ENCODE measurements at regions of chr3 and their contacts with region 1.

Region 1: DNA sequence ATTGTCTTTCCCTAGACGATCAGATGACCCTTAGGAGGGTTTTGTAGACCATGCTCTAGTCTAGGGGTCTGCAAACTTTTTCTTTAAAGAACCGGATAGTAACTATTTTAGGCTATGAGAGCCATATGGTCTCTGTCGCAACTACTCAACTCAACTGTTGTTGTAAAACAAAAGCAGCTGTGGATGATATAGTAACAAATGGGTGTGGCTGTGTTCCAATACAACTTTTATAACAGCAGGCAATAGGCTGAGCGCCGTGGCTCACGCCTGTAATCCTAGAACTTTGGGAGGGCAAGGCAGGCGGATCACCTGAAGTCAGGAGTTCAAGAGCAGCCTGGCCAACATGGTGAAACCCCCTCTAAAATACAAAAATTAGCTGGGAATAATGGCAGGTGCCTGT is 6.1 kb upstream of the CMTM6 start:
- DNase-seq: no peak
- H3K4me3 ChIP-seq: no peak overlapping the region
- H3K27ac ChIP-seq: no peak overlapping the region
- H3K4me1 ChIP-seq: no peaks in the 10 kb centered on the region
- H3K27me3 ChIP-seq: no peaks in the 10 kb centered on the region
- CTCF ChIP-seq: no peak
- POLR2A ChIP-seq: no peak

Region 2: DNA sequence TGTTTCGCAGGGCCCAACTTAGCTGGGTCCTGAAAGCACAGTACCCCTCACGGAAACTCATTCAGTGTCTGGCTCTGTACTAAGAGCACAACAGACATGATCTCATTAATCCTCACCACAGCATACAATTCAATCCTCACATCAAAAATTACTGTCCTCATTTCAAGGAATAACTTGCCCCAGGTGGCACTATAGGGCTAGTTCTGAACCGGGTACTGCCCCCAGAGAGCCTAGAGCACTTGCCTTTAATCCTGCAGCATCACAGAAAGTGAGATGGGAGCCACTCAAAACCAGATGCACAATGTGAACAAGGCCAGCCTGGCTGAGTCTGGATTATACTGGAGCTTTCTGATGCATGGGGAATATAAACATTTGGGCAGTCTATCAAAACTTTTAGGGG is 650.3 kb before region 1 on chr3:
- intact Hi-C with region 1: no loop called
- DNase-seq: no peak
- H3K4me3 ChIP-seq: no peak overlapping the region
- H3K27ac ChIP-seq: no peak overlapping the region
- H3K4me1 ChIP-seq: no peaks in the 10 kb centered on the region
- H3K27me3 ChIP-seq: no peaks in the 10 kb centered on the region
- CTCF ChIP-seq: no peak
- POLR2A ChIP-seq: no peak

Region 3: GRCh38 chr3:32667122-32667521 is 158.4 kb after region 1 on chr3:
- intact Hi-C with region 1: loop called (anchors 5 kb)
- DNase-seq: no peak
- H3K4me3 ChIP-seq: no peak overlapping the region
- H3K27ac ChIP-seq: no peak overlapping the region
- H3K4me1 ChIP-seq: no peaks in the 10 kb centered on the region
- H3K27me3 ChIP-seq: no peaks in the 10 kb centered on the region
- CTCF ChIP-seq: no peak
- POLR2A ChIP-seq: no peak

Measured in vagina (tissue), 2 donors.